ENCODE measurements at regions of chr21 and their contacts with region 1.

Region 1: GRCh38 chr21:25881525-25882376 is 147.0 kb downstream of the GABPA start:
- DNase-seq: peak; percentile 69
- H3K4me3 ChIP-seq: no peak overlapping the region
- H3K27ac ChIP-seq: no peak overlapping the region
- H3K4me1 ChIP-seq: peaks cover 0 to 24% (median 11%) of the 10 kb centered on the region in 4 donors
- H3K27me3 ChIP-seq: no peaks in the 10 kb centered on the region
- CTCF ChIP-seq: peak; percentile 84 to 96 (median 90)
- EP300 ChIP-seq: no peak
- POLR2A ChIP-seq: no peak

Region 2: GRCh38 chr21:26170471-26171257 is 288.9 kb after region 1 on chr21 and contains the start of gene APP:
- in situ Hi-C with region 1: loop called in 3 of 4 experiments (anchors 10 to 25 kb)
- intact Hi-C with region 1: no loop called
- DNase-seq: peak; percentile 89
- H3K4me3 ChIP-seq: peak within 1 kb of the TSS; percentile 46 to 87 (median 72)
- H3K27ac ChIP-seq: peak within 1 kb of the TSS; percentile 89 to 95 (median 92)
- H3K4me1 ChIP-seq: peaks cover 0 to 40% (median 28%) of the 10 kb centered on the region in 4 donors
- H3K27me3 ChIP-seq: no peaks in the 10 kb centered on the region
- CTCF ChIP-seq: peak; percentile 24 to 99 (median 89)
- EP300 ChIP-seq: no peak
- POLR2A ChIP-seq: peak; percentile 84
- total RNA-seq, gene APP: 471 to 1,291 (median 672) TPM

Measured in transverse colon (tissue), 4 donors.